AG04450 (cell line): ENCODE measurements at regions of chr5 and their contacts with region 1.

Region 1: GRCh38 chr5:35815089-35815936 is 41.4 kb upstream of the IL7R start:
- DNase-seq: no peak
- H3K4me3 ChIP-seq: no peak overlapping the region
- H3K27ac ChIP-seq: no peak overlapping the region
- H3K27me3 ChIP-seq: no peaks in the 10 kb centered on the region
- CTCF ChIP-seq: peak; percentile 60

Region 2: GRCh38 chr5:35048910-35049309 is 766.4 kb before region 1 on chr5:
- CTCF ChIA-PET with region 1: no interaction called
- POLR2A ChIA-PET with region 1: interaction called, 10 read pairs
- DNase-seq: no peak
- H3K4me3 ChIP-seq: no peak overlapping the region
- H3K27ac ChIP-seq: no peak overlapping the region
- H3K27me3 ChIP-seq: no peaks in the 10 kb centered on the region
- CTCF ChIP-seq: no peak

Region 3: GRCh38 chr5:35830587-35830986 is 15.3 kb after region 1 on chr5:
- CTCF ChIA-PET with region 1: no interaction called
- POLR2A ChIA-PET with region 1: no interaction called
- DNase-seq: no peak
- H3K4me3 ChIP-seq: no peak overlapping the region
- H3K27ac ChIP-seq: no peak overlapping the region
- H3K27me3 ChIP-seq: peaks cover 2% of the 10 kb centered on the region
- CTCF ChIP-seq: no peak

Region 4: GRCh38 chr5:35979715-35980114 is 164.4 kb after region 1 on chr5:
- CTCF ChIA-PET with region 1: no interaction called
- POLR2A ChIA-PET with region 1: no interaction called
- DNase-seq: no peak
- H3K4me3 ChIP-seq: no peak overlapping the region
- H3K27ac ChIP-seq: no peak overlapping the region
- H3K27me3 ChIP-seq: peaks cover 2% of the 10 kb centered on the region
- CTCF ChIP-seq: no peak